Activated naive CD4-positive, alpha-beta T cell treated with anti-CD3 and anti-CD28 coated beads, Interleukin-2, amount 10 ng/mL, durations not matched to agents 7 days and 5 days (primary cell): ENCODE measurements at regions of chr2 and their contacts with region 1.

Region 1: DNA sequence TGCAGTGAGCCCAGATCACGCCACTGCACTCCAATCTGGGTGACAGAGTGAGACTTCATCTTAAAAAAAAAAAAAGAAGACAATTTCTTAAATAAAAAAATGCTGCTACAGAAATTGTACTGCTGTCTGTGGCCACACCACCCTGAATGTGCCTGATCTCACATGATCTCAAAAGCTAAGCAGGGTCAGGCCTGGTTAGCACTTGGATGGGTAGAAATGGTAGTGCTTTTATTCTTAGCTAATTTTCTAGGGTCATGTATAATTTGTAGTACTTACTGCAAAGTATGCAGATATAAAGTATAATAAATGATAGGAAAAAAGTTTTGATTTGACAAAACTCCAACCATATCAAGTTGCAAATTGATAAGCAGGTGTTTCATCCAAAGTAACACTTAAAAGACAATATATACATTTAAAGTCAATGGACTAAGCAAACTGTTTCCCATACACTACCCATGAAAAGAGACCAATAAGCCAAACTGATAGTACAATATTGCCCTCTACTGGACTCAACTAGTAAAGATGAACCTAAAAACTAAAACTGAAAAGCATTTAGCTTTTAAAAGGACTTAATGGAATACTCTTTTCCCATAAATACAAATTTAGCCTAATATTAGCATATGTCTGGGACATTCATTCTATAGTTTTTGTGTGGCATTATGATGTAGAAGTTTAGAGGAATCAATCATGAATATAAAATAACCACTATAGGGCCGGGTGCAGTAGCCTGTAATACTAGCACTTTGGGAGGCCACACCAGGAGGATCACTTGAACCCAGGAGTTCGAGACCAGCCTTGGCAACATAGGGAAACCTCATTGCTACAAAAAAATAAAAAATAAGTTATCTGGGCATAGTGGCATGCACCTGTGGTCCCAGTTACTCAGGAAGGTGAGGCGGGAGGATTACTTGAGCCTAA is 18.6 kb upstream of the PEX13 start:
- DNase-seq: no peak
- H3K4me3 Mint-ChIP-seq: no peak overlapping the region
- H3K27ac Mint-ChIP-seq: no peak overlapping the region
- H3K4me1 Mint-ChIP-seq: no peaks in the 10 kb centered on the region
- H3K27me3 Mint-ChIP-seq: no peaks in the 10 kb centered on the region

Region 2: GRCh38 chr2:60707750-60708371 is 291.0 kb before region 1 on chr2:
- CTCF ChIA-PET with region 1: interaction called, 77 read pairs
- DNase-seq: no peak
- H3K4me3 Mint-ChIP-seq: no peak overlapping the region
- H3K27ac Mint-ChIP-seq: no peak overlapping the region
- H3K4me1 Mint-ChIP-seq: no peaks in the 10 kb centered on the region
- H3K27me3 Mint-ChIP-seq: peaks cover 13% of the 10 kb centered on the region

Region 3: GRCh38 chr2:60794277-60794863 is 204.5 kb before region 1 on chr2:
- CTCF ChIA-PET with region 1: interaction called, 18 read pairs
- DNase-seq: no peak
- H3K4me3 Mint-ChIP-seq: no peak overlapping the region
- H3K27ac Mint-ChIP-seq: no peak overlapping the region
- H3K4me1 Mint-ChIP-seq: peaks cover 19% of the 10 kb centered on the region
- H3K27me3 Mint-ChIP-seq: no peaks in the 10 kb centered on the region

Region 4: DNA sequence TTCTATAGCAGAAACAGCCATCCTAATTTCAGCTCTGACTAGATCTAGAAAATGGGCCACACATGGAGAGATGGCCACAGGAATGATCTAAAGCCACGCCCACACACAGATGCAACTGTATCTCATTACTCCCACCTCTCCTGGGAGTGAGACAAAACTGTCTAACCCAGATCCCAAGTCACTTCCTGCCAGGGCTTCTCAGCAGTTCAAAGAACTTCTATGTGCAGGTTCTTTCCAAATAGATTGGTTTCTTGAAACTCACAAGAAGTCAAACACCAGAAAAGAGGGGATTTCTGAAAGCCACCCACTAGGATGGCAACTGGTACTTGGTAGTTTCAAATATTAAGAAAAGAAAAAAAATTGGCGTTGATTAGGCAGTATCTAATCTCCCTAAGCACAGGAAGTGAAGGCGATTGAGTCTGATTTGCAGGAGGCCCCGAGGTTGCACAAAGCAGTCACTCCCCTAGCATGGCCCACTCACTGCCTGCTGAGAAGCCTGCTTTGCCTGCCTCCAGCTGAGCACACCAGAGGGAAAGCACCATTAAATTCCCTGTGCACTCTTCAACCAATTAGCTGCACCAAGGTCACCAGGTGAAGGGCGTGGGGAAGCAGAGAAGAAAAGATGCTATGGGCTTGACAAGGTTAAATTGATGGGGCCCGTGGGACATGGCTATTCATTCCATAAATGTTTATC is 191.8 kb before region 1 on chr2:
- CTCF ChIA-PET with region 1: interaction called, 73 read pairs
- DNase-seq: peak; percentile 42
- H3K4me3 Mint-ChIP-seq: no peak overlapping the region
- H3K27ac Mint-ChIP-seq: peak overlapping the region; percentile 86
- H3K4me1 Mint-ChIP-seq: peaks cover 38% of the 10 kb centered on the region
- H3K27me3 Mint-ChIP-seq: no peaks in the 10 kb centered on the region